ENCODE measurements at regions of chr2 and their contacts with region 1.

Region 1: DNA sequence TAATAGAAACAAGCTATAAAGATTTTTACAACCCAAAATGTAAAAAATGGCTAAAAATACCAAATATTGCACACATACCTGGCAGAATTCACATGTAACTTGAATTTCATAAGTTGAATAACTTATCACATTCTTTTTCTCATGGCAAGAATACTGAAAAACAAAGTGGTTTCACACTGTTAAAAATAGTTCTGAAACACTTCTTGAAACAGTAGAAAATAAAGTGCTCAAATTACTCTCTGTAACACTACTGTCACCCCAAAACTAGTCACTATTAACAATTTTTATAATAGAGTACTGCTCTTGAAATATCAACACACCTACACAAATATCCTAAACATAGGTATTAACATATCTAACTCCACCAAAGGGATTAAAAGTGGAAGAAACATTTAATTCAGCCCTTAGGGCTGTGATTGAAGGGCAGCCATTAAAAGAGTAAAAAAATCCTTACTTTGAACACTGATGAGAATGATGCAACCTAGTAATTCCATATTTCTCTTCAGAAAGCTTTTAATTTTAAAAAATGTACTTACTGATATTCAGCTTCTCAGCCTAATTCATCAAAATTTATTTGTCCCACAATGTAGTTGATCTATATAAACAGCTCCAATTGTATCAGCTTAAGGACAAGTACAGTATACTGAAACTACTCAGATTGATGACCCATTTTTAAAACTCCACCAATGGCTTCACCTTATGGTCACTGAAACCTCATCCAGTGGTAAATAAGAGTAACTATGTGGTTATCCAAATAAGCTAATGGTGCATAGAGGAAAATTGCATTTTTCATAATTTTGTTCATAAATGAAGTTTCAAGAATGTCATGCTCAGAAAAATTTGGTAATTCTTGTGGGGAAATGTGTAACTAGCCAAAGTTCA is 31.4 kb downstream of the ATF2 start:
- DNase-seq: peak in 1 of 2 experiments; percentile 26
- H3K4me3 ChIP-seq: no peak overlapping the region
- H3K27ac ChIP-seq: no peak overlapping the region
- H3K4me1 ChIP-seq: no peaks in the 10 kb centered on the region
- H3K27me3 ChIP-seq: no peaks in the 10 kb centered on the region
- CTCF ChIP-seq: no peak

Region 2: GRCh38 chr2:174546581-174547506 is 589.7 kb before region 1 on chr2:
- CTCF ChIA-PET with region 1: no interaction called
- POLR2A ChIA-PET with region 1: no interaction called
- intact Hi-C with region 1: no loop called
- DNase-seq: peak; percentile 74 to 79
- H3K4me3 ChIP-seq: peak overlapping the region; percentile 58
- H3K27ac ChIP-seq: no peak overlapping the region
- H3K4me1 ChIP-seq: 0 out of 2 replicates have a peak, but pooled peaks cover 4% of the 10 kb centered on the region
- H3K27me3 ChIP-seq: 0 out of 2 replicates have a peak, but pooled peaks cover 5% of the 10 kb centered on the region
- CTCF ChIP-seq: peak; percentile 80

Region 3: DNA sequence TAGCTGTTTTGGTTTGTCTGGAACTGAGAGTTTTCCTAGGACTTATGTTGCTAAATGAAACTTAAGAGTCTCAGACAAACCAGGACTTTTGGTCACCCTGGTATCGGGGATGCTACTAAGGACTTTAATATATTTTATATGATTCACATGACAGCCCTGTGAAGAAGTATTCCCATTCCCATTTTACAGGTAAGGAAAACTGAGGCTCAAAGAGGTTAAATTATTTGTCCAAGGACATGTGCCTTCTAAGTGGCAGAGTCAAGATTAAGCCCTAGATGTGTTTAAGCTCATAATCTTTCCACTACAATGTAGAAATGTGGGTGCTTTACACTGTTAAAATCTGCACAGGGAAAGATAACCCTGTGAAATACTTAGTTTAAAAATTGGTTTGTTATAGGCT is 122.6 kb after region 1 on chr2:
- CTCF ChIA-PET with region 1: interaction called, 15 read pairs
- POLR2A ChIA-PET with region 1: no interaction called
- intact Hi-C with region 1: no loop called
- DNase-seq: no peak
- H3K4me3 ChIP-seq: no peak overlapping the region
- H3K27ac ChIP-seq: no peak overlapping the region
- H3K4me1 ChIP-seq: no peaks in the 10 kb centered on the region
- H3K27me3 ChIP-seq: 0 out of 2 replicates have a peak, but pooled peaks cover 11% of the 10 kb centered on the region
- CTCF ChIP-seq: no peak

Measured in PC-9 (cell line).